HepG2 (cell line): ENCODE measurements at regions of chr1 and their contacts with region 1.

Region 1: DNA sequence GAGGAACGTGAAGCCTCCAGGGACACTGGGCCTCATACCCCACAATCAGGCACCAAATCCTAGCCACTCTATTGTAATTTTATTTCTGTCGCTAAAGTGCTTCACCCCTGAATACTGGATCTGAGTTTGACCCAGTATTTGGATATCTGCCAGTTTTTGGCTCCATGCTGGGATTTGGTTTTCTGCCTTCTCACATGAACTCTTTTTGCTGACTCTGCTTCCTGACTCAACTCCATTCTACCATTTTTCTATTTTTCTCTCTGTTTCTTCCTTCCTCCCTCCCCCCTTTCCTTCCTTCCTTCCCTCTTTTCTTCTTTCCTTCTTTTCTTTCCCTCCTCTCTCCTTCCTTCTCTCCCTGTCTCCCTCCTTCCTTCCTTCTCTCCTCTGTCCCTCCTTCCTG is 151.3 kb upstream of the GJB5 start:
- DNase-seq: no peak
- ATAC-seq: no peak
- H3K4me3 ChIP-seq: no peak overlapping the region
- H3K27ac ChIP-seq: no peak overlapping the region
- H3K4me1 ChIP-seq: no peaks in the 10 kb centered on the region
- H3K27me3 ChIP-seq: no peaks in the 10 kb centered on the region
- CTCF ChIP-seq: no peak
- EP300 ChIP-seq: no peak
- POLR2A ChIP-seq: no peak
- RAD21 ChIP-seq: no peak

Region 2: DNA sequence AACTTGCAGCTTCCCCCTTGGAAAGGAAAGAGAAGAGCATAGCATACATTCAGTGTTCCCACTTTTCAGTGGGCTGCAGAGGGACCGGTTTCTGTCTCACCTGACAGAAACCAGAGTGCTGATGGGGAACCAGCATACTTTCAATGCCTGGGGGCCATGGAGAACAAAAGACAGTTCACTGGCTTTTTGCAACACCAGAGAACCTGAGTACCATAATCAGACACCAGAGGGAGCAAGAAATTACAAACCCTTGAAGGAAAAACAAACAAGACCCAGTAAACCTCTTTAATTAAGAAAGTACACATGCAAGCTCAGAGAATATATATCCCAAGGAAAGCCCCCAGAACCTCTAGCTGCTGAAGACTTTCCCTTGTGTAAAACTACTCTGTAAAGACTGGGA is 489.7 kb before region 1 on chr1:
- CTCF ChIA-PET with region 1: interaction called, 15 read pairs
- POLR2A ChIA-PET with region 1: no interaction called
- in situ Hi-C with region 1: loop called (anchors 10 kb)
- intact Hi-C with region 1: loop called (anchors 5 kb)
- DNase-seq: peak; percentile 10
- ATAC-seq: no peak
- H3K4me3 ChIP-seq: no peak overlapping the region
- H3K27ac ChIP-seq: no peak overlapping the region
- H3K4me1 ChIP-seq: no peaks in the 10 kb centered on the region
- H3K27me3 ChIP-seq: no peaks in the 10 kb centered on the region
- CTCF ChIP-seq: peak; percentile 22; the same call in 1 of the 2 replicates
- EP300 ChIP-seq: no peak
- POLR2A ChIP-seq: no peak
- RAD21 ChIP-seq: no peak

Region 3: DNA sequence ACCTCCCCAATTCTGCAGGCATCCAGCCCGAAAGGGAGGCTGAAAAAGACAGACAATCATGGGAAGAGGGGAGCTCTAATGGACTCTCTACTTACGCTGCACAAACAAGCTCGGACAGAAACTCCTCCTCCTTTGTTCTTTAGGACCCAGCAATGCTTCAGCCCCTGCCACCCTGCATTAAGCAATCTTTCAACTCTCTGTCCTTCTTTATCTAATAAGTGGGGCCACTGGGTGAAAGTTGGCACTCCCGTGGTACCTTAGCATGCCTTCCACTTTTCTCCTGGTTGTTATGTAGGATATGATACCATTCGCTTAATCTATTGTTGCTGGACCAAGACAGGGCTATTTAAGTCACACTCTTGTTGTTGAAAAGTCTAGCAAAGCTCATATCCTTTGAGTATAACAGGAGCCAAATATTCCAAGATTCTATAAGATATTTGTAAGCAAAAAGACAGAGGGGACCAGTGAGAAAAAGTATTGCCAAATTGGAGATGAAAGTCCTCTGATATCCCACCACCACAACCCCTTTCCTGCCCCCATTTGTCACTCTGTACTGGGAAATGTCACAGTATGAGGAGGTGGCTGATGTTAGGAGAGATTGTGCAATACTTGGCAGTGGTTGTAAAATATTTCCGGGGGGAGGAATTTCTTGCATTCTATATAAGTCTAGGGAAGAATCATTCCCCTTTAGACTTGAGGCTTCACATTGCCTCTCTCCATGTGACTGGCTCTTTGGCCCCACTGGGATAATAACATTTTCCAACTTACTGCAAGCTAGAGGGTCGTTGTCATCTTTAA is 13.9 kb after region 1 on chr1:
- CTCF ChIA-PET with region 1: no interaction called
- POLR2A ChIA-PET with region 1: no interaction called
- in situ Hi-C with region 1: no loop called
- intact Hi-C with region 1: no loop called
- DNase-seq: no peak
- ATAC-seq: no peak
- H3K4me3 ChIP-seq: no peak overlapping the region
- H3K27ac ChIP-seq: no peak overlapping the region
- H3K4me1 ChIP-seq: no peaks in the 10 kb centered on the region
- H3K27me3 ChIP-seq: no peaks in the 10 kb centered on the region
- CTCF ChIP-seq: no peak
- EP300 ChIP-seq: no peak
- POLR2A ChIP-seq: no peak
- RAD21 ChIP-seq: no peak